Pancreas (tissue), 10 donors: ENCODE measurements at regions of chr15 and their contacts with region 1.

Region 1: DNA sequence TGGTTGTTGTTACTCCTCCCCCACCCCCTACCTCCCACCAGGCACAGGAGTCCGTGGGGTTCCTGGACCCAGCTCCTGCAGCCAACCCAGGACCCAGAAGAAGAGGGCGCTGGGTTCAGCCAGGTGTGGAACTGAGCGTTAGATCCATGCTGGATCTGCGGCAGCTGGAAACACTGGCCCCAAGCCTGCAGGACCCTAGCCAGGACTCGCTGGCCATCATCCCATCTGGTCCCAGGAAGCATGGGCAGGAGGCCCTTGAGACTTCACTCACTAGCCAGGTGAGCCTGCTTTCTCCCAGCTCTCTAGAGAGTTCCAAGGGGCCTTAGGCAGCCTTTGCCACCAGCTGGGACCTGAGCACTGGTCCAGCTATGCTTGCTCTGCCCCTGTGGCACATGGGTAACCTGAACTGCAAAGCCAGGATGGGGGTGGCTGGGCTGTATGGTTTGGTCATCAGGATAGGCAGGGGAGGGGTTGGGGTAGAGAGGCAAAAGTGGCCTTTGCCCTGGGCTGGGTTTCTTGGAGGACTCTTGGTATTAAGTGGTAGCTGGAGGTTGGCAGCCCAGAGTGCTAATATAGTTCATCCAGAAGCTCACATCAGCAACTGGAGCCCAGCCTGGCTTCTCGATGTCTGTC is 7.0 kb upstream of the JMJD7 start:
- DNase-seq: peak; percentile 71 to 92 (median 84)
- ATAC-seq: peak; percentile 89 to 95 (median 92)
- H3K4me3 ChIP-seq: no peak overlapping the region
- H3K27ac ChIP-seq: peak overlapping the region in 2 of 4 donors; percentile 19 to 62
- H3K4me1 ChIP-seq: peaks cover 0 to 10% (median 4%) of the 10 kb centered on the region in 3 donors
- H3K27me3 ChIP-seq: no peaks in the 10 kb centered on the region
- CTCF ChIP-seq: no peak

Region 2: DNA sequence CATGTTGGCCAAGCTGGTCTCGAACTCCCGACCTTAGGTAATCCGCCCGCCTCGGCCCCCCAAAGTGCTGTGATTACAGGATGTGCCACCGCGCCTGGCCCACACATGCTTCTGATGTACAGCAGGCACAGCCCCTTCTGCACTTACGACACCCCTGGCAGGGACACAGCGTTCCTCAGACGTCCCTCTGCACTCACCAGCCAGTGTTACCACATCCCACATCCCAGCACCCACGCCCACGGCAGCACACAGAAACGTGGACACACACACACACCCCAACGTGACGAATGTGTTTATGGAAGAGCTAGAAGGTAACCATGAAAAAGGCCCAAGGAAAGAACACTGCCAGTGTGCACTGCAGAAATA is 276.3 kb before region 1 on chr15:
- intact Hi-C with region 1: no loop called
- DNase-seq: peak in 1 of 6 donors; percentile 27
- ATAC-seq: peak in 3 of 4 donors; percentile 6 to 24 (median 10)
- H3K4me3 ChIP-seq: peak overlapping the region in 2 of 4 donors; percentile 70
- H3K27ac ChIP-seq: no peak overlapping the region
- H3K4me1 ChIP-seq: peaks cover 0 to 5% (median 0%) of the 10 kb centered on the region in 3 donors
- H3K27me3 ChIP-seq: no peaks in the 10 kb centered on the region
- CTCF ChIP-seq: no peak

Region 3: GRCh38 chr15:41904541-41905005 is 83.7 kb after region 1 on chr15:
- intact Hi-C with region 1: loop called in 1 of 3 experiments (anchors 5 kb)
- DNase-seq: peak in 3 of 6 donors; percentile 49 to 65 (median 57)
- ATAC-seq: peak; percentile 65 to 82 (median 81)
- H3K4me3 ChIP-seq: no peak overlapping the region
- H3K27ac ChIP-seq: no peak overlapping the region
- H3K4me1 ChIP-seq: peaks cover 0 to 5% (median 0%) of the 10 kb centered on the region in 3 donors
- H3K27me3 ChIP-seq: no peaks in the 10 kb centered on the region
- CTCF ChIP-seq: peak; percentile 54 to 79 (median 76)